Gastrocnemius medialis (tissue), 4 donors: ENCODE measurements at regions of chr9 and their contacts with region 1.

Region 1: DNA sequence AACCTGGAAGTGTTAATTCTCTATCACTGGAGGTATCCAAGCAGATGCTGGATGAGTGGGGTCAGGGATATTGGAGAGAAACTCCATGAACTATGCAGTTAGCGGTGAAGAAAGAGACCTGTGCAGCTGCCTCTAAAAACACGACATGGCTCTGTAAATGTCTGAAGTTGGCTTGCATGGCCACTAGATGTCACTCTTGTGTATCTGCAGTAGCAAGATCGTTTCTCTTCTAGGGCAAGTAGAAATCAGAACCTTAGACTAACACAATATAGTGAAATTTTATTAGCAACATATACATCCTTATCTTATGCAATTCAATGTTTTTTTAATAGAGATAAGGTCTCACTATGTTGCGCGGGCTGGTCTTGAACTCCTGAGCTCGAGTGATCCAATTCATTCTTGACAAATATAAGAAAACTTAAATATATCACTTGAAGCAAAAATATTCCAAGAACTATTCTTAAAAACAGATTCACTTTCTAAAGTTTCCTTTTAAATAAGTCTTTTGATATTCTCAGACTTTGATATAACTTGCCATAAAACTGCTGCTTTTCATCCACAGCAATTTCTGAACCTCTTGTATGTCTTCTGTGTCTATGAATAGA is 2.9 kb downstream of the OR2S2 start:
- DNase-seq: peak in 1 of 2 donors; percentile 42
- ATAC-seq: peak; percentile 85 to 87
- H3K4me3 ChIP-seq: no peak overlapping the region
- H3K27ac ChIP-seq: no peak overlapping the region
- H3K4me1 ChIP-seq: no peaks in the 10 kb centered on the region
- H3K27me3 ChIP-seq: no peaks in the 10 kb centered on the region
- CTCF ChIP-seq: peak; percentile 66 to 86 (median 70)
- POLR2A ChIP-seq: no peak

Region 2: DNA sequence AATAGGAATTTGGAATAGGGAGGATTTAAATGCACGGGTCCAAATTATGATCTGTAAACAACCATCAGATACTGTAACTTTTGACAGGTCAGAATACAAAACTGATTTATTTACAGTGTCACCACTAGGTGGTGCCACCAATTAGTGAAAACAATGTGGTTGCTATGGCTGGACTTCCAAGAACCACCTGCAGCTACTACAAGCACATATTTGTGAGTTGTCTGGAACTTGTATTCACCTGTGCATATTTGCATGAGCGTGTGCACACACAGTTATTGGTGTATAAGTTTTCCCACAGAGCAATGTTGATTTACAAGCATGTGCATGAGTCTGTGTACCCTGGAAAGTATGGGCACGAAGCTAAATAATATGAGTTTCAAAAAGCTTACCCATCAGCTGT is 52.0 kb before region 1 on chr9:
- in situ Hi-C with region 1: loop called in 1 of 4 experiments (anchors 5 kb)
- intact Hi-C with region 1: no loop called
- DNase-seq: no peak
- ATAC-seq: no peak
- H3K4me3 ChIP-seq: no peak overlapping the region
- H3K27ac ChIP-seq: no peak overlapping the region
- H3K4me1 ChIP-seq: peaks cover 28 to 41% of the 10 kb centered on the region in 2 donors
- H3K27me3 ChIP-seq: no peaks in the 10 kb centered on the region
- CTCF ChIP-seq: peak; percentile 57 to 76 (median 67)
- POLR2A ChIP-seq: no peak

Region 3: GRCh38 chr9:36023260-36024048 is 68.4 kb after region 1 on chr9:
- in situ Hi-C with region 1: loop called in 2 of 4 experiments (anchors 5 to 10 kb)
- intact Hi-C with region 1: loop called (anchors 1 kb)
- DNase-seq: peak; percentile 13 to 36
- ATAC-seq: peak; percentile 74 to 76
- H3K4me3 ChIP-seq: no peak overlapping the region
- H3K27ac ChIP-seq: no peak overlapping the region
- H3K4me1 ChIP-seq: no peaks in the 10 kb centered on the region
- H3K27me3 ChIP-seq: no peaks in the 10 kb centered on the region
- CTCF ChIP-seq: peak; percentile 36 to 81 (median 72)
- POLR2A ChIP-seq: no peak

Region 4: GRCh38 chr9:36029765-36030528 is 74.9 kb after region 1 on chr9:
- in situ Hi-C with region 1: loop called in 1 of 4 experiments (anchors 5 kb)
- intact Hi-C with region 1: no loop called
- DNase-seq: no peak
- ATAC-seq: peak; percentile 96 to 97
- H3K4me3 ChIP-seq: no peak overlapping the region
- H3K27ac ChIP-seq: peak overlapping the region; percentile 28 to 64 (median 51)
- H3K4me1 ChIP-seq: peaks cover 14% of the 10 kb centered on the region in 2 donors
- H3K27me3 ChIP-seq: no peaks in the 10 kb centered on the region
- CTCF ChIP-seq: no peak
- POLR2A ChIP-seq: no peak

Region 5: DNA sequence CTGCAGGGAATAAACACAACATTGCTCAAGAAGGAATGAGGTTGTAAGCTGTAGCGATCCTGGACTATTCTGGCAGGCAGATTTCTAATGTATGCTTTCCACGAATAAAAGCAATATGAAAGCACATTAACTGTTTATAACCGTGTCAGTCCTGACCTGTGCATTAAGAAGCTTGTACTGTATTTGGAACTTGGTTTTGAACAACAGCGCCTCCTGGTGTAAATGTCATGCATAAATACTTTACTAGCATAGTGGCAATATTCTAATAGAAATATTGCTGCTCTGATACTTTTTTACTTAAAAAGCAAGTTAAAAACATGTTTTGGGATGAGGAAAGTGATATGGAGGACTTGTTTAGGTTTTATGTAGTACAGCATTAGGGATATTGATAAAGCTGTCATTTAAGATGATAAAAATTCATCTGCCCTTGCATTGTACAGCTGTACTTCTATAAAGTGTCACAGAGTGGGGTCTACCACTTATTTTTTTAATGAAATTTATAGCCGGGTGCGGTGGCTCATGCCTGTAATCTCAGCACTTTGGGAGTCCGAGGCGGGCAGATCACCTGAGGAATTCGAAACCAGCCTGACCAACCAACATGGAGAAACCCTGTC is 373.9 kb after region 1 on chr9:
- in situ Hi-C with region 1: loop called in 2 of 4 experiments (anchors 25 kb)
- intact Hi-C with region 1: no loop called
- DNase-seq: no peak
- ATAC-seq: peak; percentile 57 to 82
- H3K4me3 ChIP-seq: no peak overlapping the region
- H3K27ac ChIP-seq: no peak overlapping the region
- H3K4me1 ChIP-seq: peaks cover 4% of the 10 kb centered on the region in 2 donors
- H3K27me3 ChIP-seq: no peaks in the 10 kb centered on the region
- CTCF ChIP-seq: peak; percentile 64 to 81 (median 71)
- POLR2A ChIP-seq: no peak